Natural killer cell (primary cell): ENCODE measurements at regions of chr16 and their contacts with region 1.

Region 1: GRCh38 chr16:71883849-71884638 is at the start of gene ZNF821:
- DNase-seq: peak; percentile 70 to 90
- ATAC-seq: peak; percentile 62 to 77 (median 64)
- H3K4me3 ChIP-seq: peak within 1 kb of the TSS; percentile 74
- H3K4me3 Mint-ChIP-seq: peak within 1 kb of the TSS; percentile 93
- H3K27ac ChIP-seq: peak within 1 kb of the TSS; percentile 78
- H3K27ac Mint-ChIP-seq: peak within 1 kb of the TSS; percentile 91 to 96
- H3K4me1 ChIP-seq: peaks cover 36% of the 10 kb centered on the region
- H3K4me1 Mint-ChIP-seq: peaks cover 46 to 49% of the 10 kb centered on the region in 2 donors
- H3K27me3 ChIP-seq: no peaks in the 10 kb centered on the region
- H3K27me3 Mint-ChIP-seq: no peaks in the 10 kb centered on the region
- CTCF ChIP-seq: peak; percentile 45
- total RNA-seq, gene ZNF821: 14.0 to 19.1 (median 18.2) TPM

Region 2: GRCh38 chr16:71594000-71594646 is 289.9 kb before region 1 on chr16:
- intact Hi-C with region 1: no loop called
- DNase-seq: no peak
- ATAC-seq: no peak
- H3K4me3 ChIP-seq: no peak overlapping the region
- H3K4me3 Mint-ChIP-seq: no peak overlapping the region
- H3K27ac ChIP-seq: no peak overlapping the region
- H3K27ac Mint-ChIP-seq: no peak overlapping the region
- H3K4me1 ChIP-seq: no peaks in the 10 kb centered on the region
- H3K4me1 Mint-ChIP-seq: no peaks in the 10 kb centered on the region
- H3K27me3 ChIP-seq: no peaks in the 10 kb centered on the region
- H3K27me3 Mint-ChIP-seq: peaks cover 27 to 50% of the 10 kb centered on the region in 2 donors
- CTCF ChIP-seq: no peak

Region 3: GRCh38 chr16:71723537-71724319 is 160.3 kb before region 1 on chr16:
- intact Hi-C with region 1: loop called (anchors 5 kb)
- DNase-seq: peak; percentile 80 to 91
- ATAC-seq: peak; percentile 90 to 94 (median 90)
- H3K4me3 ChIP-seq: peak overlapping the region; percentile 52
- H3K4me3 Mint-ChIP-seq: peak overlapping the region; percentile 87
- H3K27ac ChIP-seq: peak overlapping the region; percentile 54
- H3K27ac Mint-ChIP-seq: peak overlapping the region; percentile 64 to 65
- H3K4me1 ChIP-seq: peaks cover 16% of the 10 kb centered on the region
- H3K4me1 Mint-ChIP-seq: peaks cover 15 to 18% of the 10 kb centered on the region in 2 donors
- H3K27me3 ChIP-seq: no peaks in the 10 kb centered on the region
- H3K27me3 Mint-ChIP-seq: no peaks in the 10 kb centered on the region
- CTCF ChIP-seq: no peak

Region 4: GRCh38 chr16:71775949-71776348 is 108.1 kb before region 1 on chr16:
- intact Hi-C with region 1: no loop called
- DNase-seq: no peak
- ATAC-seq: no peak
- H3K4me3 ChIP-seq: no peak overlapping the region
- H3K4me3 Mint-ChIP-seq: peak overlapping the region; percentile 31
- H3K27ac ChIP-seq: no peak overlapping the region
- H3K27ac Mint-ChIP-seq: peak overlapping the region; percentile 51 to 67
- H3K4me1 ChIP-seq: no peaks in the 10 kb centered on the region
- H3K4me1 Mint-ChIP-seq: peaks cover 27 to 28% of the 10 kb centered on the region in 2 donors
- H3K27me3 ChIP-seq: no peaks in the 10 kb centered on the region
- H3K27me3 Mint-ChIP-seq: no peaks in the 10 kb centered on the region
- CTCF ChIP-seq: no peak

Region 5: DNA sequence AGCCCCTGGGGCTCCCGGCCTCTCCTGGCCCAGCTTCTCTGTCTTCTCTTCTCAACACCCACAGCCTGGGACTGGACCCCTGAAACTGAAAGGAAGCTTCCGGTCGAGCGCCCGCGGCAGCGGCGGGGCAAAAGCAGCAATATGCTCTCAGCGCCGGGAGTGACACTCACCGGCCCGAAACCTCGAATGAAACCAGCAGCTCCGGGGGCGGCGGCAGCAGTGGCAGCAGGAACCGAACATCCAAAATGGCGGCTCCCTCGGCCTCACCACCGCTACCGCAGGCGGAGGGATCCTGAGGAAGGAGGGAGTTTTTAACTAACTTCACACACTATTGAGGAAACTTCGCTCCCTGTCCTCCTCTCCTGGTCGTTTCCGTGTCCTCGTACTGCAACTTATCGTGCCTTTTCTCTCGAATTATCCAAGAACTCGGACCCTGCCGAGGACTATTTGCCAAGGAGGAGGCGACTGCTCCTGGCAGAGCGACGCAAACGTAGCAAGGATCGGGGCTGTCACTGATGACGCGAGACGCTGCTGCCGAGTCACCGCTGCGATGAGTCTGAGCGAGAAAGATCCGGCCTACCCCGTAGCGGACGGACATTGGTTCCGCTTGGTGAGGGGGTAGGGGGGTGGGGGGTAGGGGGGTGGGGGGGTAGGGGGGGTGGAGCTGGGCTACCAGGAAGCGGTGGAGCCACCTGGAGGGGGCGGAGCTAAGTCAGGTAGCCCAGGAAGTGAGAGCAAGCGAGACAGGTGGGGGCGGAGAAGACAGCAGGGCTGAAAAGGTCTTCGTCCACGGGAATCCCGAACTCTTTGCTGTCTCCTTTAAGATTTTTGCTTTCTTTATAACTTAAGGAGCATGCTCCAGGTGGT is 75.2 kb before region 1 on chr16 and contains the start of gene AP1G1:
- intact Hi-C with region 1: loop called (anchors 2 kb)
- DNase-seq: peak; percentile 86 to 98
- ATAC-seq: peak; percentile 90 to 97 (median 92)
- H3K4me3 ChIP-seq: peak within 1 kb of the TSS; percentile 89
- H3K4me3 Mint-ChIP-seq: peak within 1 kb of the TSS; percentile 90
- H3K27ac ChIP-seq: peak within 1 kb of the TSS; percentile 100
- H3K27ac Mint-ChIP-seq: peak within 1 kb of the TSS; percentile 93 to 95
- H3K4me1 ChIP-seq: peaks cover 22% of the 10 kb centered on the region
- H3K4me1 Mint-ChIP-seq: peaks cover 16 to 30% of the 10 kb centered on the region in 2 donors
- H3K27me3 ChIP-seq: no peaks in the 10 kb centered on the region
- H3K27me3 Mint-ChIP-seq: no peaks in the 10 kb centered on the region
- CTCF ChIP-seq: no peak
- total RNA-seq, gene AP1G1: 176 to 212 (median 188) TPM

Region 6: DNA sequence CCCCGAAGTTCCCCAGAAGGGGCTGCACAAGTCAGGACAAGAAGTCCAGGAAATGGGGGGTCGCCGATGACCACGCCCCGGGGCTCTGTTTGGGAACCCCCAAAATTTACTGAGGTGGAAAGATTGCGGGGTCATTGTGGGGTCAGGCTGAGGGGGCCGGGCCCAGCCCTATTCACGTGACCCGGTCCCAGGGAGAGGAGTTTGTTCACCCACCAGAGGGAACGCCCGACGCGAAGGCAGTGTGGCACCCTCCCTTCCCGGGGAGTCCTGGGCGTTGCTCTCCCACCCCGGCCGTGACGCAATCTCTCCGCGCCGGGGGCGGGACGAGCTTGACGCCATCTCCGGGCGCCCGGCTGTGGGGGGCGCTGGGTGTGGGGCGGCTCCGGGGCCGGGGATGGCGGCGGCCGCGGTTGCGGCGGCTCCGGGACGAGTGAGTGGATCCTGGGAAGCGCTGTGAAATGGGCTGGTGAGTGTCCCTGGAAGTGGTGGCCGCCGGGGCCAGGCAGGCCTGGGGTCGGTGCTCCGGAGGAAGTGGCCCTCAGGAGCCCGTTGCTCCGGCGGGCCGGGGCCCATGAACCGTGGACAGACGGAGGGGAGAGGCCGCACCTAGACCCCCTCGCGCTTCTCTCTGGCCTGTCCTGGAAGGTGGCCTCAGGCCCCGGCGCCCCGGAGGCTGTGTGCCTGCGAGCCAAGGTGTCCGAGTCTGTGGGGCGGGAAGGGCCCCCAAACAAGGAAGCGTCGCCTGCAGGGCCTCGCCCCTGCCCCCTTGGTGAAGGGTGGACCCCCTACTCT is 38.2 kb before region 1 on chr16 and contains the start of gene ATXN1L:
- intact Hi-C with region 1: loop called (anchors 5 kb)
- DNase-seq: peak; percentile 96 to 97
- ATAC-seq: peak; percentile 92 to 97 (median 93)
- H3K4me3 ChIP-seq: peak within 1 kb of the TSS; percentile 89
- H3K4me3 Mint-ChIP-seq: peak within 1 kb of the TSS; percentile 94
- H3K27ac ChIP-seq: peak within 1 kb of the TSS; percentile 88
- H3K27ac Mint-ChIP-seq: peak within 1 kb of the TSS; percentile 94 to 97
- H3K4me1 ChIP-seq: peaks cover 13% of the 10 kb centered on the region
- H3K4me1 Mint-ChIP-seq: peaks cover 30 to 37% of the 10 kb centered on the region in 2 donors
- H3K27me3 ChIP-seq: no peaks in the 10 kb centered on the region
- H3K27me3 Mint-ChIP-seq: no peaks in the 10 kb centered on the region
- CTCF ChIP-seq: no peak
- total RNA-seq, gene ATXN1L: 59.7 to 66.9 (median 59.8) TPM

Region 7: GRCh38 chr16:71894921-71895678 is 11.1 kb after region 1 on chr16 and contains the start of gene IST1:
- intact Hi-C with region 1: loop called (anchors 1 kb)
- DNase-seq: peak; percentile 97 to 99
- ATAC-seq: peak; percentile 92 to 98 (median 92)
- H3K4me3 ChIP-seq: peak within 1 kb of the TSS; percentile 68
- H3K4me3 Mint-ChIP-seq: peak within 1 kb of the TSS; percentile 96
- H3K27ac ChIP-seq: peak within 1 kb of the TSS; percentile 87
- H3K27ac Mint-ChIP-seq: peak within 1 kb of the TSS; percentile 95 to 98
- H3K4me1 ChIP-seq: peaks cover 32% of the 10 kb centered on the region
- H3K4me1 Mint-ChIP-seq: peaks cover 25 to 35% of the 10 kb centered on the region in 2 donors
- H3K27me3 ChIP-seq: no peaks in the 10 kb centered on the region
- H3K27me3 Mint-ChIP-seq: no peaks in the 10 kb centered on the region
- CTCF ChIP-seq: no peak
- total RNA-seq, gene IST1: 363 to 391 (median 378) TPM